ENCODE measurements at regions of chr19 and their contacts with region 1.

Region 1: DNA sequence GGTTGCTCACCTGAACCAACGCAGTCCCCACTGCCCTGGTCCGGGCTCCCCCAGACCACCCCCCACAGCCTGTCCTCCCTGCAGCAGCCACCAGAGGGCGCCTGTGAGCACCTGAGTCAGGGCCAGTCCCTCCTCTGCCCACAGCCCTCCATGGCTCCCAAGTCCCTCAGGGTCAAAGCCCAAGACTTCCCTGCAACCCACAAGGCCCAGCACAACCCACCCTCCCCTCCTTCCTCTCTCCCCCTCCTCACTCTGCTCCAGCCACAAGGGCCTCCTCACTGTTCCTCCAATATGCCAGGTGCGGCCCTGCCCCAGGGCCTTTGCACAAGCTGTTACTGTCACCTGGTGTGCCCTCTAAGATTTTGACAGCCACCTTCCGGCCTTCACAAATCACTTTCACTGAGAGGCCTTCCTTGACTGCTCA is 10.9 kb downstream of the GNA15 start:
- DNase-seq: no peak
- ATAC-seq: peak; percentile 80
- H3K4me3 ChIP-seq: no peak overlapping the region
- H3K27ac ChIP-seq: no peak overlapping the region
- H3K4me1 ChIP-seq: peaks cover 15% of the 10 kb centered on the region
- H3K27me3 ChIP-seq: no peaks in the 10 kb centered on the region
- CTCF ChIP-seq: peak; percentile 60 to 97 (median 79)
- EP300 ChIP-seq: no peak
- POLR2A ChIP-seq: no peak
- RAD21 ChIP-seq: peak; percentile 44

Region 2: GRCh38 chr19:3132971-3133792 is 13.5 kb before region 1 on chr19:
- CTCF ChIA-PET with region 1: interaction called, 117 read pairs
- POLR2A ChIA-PET with region 1: interaction called, 27 read pairs
- RAD21 ChIA-PET with region 1: interaction called, 6 read pairs
- SMC1A ChIA-PET with region 1: interaction called, 14 read pairs
- in situ Hi-C with region 1: no loop called
- intact Hi-C with region 1: no loop called
- DNase-seq: peak; percentile 85
- ATAC-seq: peak; percentile 90
- H3K4me3 ChIP-seq: no peak overlapping the region; the same call in 1 of the 2 replicates
- H3K27ac ChIP-seq: peak overlapping the region; percentile 84
- H3K4me1 ChIP-seq: peaks cover 17% of the 10 kb centered on the region
- H3K27me3 ChIP-seq: no peaks in the 10 kb centered on the region
- CTCF ChIP-seq: no peak
- EP300 ChIP-seq: peak; percentile 61 to 83; a peak in 3 of 4 replicates
- POLR2A ChIP-seq: peak; percentile 58; the same call in 1 of the 2 replicates
- RAD21 ChIP-seq: no peak

Region 3: DNA sequence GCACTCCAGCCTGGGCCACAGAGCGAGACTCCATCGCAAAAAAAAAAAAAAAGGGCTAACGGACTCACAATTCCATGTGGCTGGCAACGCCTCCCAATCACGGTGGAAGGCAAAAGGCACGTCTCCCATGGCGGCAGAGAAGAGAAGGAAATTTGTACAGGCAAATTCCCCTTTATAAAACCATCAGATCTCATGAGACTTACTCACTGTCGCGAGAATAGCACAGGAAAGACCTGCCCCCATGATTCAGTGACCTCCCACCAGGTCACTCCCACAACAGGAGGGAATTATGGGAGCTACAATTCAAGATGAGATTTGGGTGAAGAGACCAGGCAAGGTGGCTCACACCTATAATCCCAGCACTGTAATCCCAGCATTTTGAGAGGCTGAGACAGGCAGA is 767.5 kb after region 1 on chr19:
- CTCF ChIA-PET with region 1: no interaction called
- POLR2A ChIA-PET with region 1: no interaction called
- RAD21 ChIA-PET with region 1: no interaction called
- SMC1A ChIA-PET with region 1: no interaction called
- in situ Hi-C with region 1: no loop called
- intact Hi-C with region 1: no loop called
- DNase-seq: no peak
- ATAC-seq: no peak
- H3K4me3 ChIP-seq: no peak overlapping the region
- H3K27ac ChIP-seq: no peak overlapping the region
- H3K4me1 ChIP-seq: no peaks in the 10 kb centered on the region
- H3K27me3 ChIP-seq: no peaks in the 10 kb centered on the region
- CTCF ChIP-seq: no peak
- EP300 ChIP-seq: no peak
- POLR2A ChIP-seq: no peak
- RAD21 ChIP-seq: no peak

Measured in GM12878 (cell line).